ENCODE measurements at regions of chr21 and their contacts with region 1.

Region 1: DNA sequence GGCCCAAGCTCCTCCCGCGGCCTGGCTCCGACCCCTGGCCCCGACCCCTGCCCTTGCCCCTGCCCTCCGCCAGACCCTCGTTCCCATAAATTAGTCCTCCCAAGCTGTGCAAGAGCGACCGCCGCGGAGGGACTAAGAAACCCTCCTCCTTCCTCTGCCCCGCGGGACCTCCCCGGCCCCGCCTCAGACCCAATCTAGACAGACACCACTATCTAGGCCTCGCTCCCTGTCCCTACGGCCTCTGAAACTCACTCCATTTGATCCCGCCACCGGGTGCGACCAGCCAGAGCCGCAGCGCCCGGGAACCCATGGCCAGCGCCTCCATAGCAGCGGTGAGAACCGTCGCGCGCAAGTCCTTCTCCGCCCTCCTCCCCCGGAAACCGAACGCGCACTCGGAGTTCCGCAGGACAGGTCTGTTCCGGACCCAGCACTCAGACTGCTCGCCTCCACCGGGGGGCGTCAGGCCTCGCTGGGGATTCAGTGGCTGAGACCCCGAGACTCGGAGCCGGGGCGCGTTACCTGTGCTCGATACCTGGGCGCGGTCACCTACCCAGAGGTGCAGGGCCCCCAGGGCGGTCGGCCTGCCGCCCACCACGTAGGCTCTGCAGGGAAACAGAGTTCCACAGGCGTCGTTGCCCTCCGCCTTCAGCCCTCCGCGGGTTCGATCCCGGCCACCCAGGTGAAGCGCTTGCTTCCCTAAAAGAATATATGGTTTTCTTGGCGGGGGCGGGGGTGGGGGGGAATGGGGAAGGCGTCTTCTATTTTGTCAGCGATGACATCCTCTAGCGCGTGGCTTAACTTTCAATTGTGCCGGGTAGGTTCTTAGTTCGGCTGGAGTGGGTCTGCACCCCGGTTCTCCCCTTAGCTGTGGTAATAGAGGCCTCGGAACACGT is at the start of gene MRPL39:
- DNase-seq: peak; percentile 78 to 96 (median 89)

Region 2: GRCh38 chr21:25421327-25422028 is 185.9 kb before region 1 on chr21:
- intact Hi-C with region 1: no loop called
- DNase-seq: no peak

Region 3: GRCh38 chr21:25647647-25648046 is 40.2 kb after region 1 on chr21:
- intact Hi-C with region 1: no loop called
- DNase-seq: no peak

Region 4: DNA sequence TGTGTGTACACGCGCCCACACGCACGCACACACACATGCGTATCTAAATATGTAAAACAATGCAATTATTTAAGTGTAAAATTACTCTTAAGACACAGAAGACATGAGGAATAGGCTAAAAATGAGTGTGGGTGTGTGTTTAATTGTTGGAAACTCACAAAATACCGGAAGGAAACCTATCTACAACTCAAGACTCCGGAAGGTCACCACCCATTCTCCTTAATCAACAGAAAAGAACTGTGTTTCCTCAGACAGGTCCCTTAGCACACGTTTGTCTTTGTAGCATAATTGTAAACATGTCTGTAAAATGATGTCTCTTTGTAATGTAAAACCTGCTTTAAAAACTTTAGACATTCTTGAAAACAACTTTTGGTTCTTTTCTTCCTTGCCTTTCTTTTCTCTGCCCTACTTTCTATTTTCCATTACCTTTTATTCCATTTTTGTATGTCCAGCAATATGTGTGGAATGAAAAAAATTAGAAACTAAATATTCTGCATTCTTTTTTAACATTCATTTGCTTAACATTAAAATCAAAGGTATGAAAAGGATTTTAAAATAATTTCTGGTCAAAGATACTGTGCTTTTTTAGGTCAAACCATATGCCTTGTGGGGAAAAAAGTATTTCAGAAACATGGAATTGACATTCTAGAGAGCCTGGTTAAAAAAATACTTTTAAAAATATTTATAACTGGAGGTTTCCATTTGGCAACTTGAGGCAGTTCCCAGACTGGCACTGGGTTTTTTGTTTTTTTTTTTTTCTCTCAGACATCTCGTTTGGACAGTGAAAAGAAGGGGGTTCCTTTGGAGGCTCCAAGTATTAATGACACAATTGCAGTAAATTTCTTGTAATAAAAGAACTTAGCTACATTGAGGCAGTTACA is 81.1 kb after region 1 on chr21:
- intact Hi-C with region 1: no loop called
- DNase-seq: no peak

Region 5: DNA sequence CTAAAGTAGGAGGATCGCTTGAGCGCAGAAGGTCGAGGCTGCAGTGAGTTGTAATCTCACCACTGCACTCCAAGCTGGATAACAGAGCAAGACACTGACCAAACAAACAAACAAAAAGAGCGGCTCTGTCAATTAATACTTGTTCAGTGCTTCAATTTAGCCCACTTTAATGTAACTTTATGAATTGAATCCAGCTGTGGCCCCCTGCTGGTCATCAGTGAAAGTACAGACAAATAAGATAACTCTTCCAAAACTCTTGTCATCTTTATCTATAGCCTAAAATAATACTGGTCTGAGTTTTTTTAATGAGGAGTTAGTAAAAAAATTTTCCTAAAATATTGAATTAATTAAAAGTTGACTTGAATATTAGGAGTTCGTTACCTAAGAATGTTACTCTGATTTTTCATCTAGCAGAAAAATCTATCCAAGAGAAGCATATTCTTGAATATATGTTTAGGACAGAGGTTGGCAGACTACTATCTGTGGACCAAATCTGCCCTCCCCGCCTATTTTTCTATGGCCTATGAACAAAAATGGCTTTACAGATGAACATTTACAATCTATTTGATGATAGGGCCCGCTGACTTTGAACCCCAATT is 101.2 kb after region 1 on chr21:
- intact Hi-C with region 1: loop called (anchors 5 kb)
- DNase-seq: peak in 38 of 42 donors; percentile 10 to 85 (median 54)

Region 6: DNA sequence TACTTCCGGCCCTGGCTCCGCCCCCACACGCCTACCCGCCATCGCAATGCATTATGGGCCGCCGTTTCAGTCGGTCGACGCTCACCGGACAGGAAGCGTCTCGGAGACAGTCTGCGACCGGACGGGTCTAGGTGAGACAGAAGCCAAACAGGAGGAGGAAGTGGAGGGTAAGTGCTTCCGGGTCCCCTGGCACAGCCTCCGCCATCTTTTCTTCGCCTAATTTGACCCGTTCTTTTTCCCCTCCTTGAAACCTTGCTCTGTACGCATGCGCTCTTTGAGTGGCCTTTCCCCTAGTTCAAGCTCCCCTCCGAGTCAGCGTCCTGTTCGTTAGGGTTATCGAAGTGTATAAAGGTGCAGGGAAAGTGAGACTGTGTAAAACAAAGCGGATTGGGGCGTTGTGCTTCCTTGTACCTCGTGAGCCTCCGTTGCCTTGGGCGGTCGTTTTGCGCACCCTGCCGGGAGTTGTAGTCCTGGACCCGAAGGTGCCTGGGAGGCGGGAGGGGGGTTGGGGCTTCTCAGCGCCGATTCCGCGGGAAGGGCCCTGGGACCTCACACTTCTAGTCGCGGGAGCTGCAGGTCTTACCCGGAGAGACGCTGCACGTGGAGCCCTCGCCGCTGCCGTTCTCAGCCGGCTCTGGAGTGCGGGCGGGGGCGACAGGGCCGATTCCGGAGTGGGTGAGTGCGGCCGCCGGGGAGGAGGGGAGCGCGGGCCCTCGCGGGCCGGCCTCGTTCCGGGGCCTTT is 127.7 kb after region 1 on chr21 and contains the starts of genes ATP5PF and GABPA:
- intact Hi-C with region 1: loop called (anchors 2 kb)
- DNase-seq: peak; percentile 93 to 99 (median 97)